ENCODE measurements at regions of chr19 and their contacts with region 1.

Region 1: GRCh38 chr19:49983645-49984229 is 22.8 kb upstream of the SIGLEC11 start:
- DNase-seq: peak in 7 of 10 donors; percentile 57 to 94 (median 69)

Region 2: DNA sequence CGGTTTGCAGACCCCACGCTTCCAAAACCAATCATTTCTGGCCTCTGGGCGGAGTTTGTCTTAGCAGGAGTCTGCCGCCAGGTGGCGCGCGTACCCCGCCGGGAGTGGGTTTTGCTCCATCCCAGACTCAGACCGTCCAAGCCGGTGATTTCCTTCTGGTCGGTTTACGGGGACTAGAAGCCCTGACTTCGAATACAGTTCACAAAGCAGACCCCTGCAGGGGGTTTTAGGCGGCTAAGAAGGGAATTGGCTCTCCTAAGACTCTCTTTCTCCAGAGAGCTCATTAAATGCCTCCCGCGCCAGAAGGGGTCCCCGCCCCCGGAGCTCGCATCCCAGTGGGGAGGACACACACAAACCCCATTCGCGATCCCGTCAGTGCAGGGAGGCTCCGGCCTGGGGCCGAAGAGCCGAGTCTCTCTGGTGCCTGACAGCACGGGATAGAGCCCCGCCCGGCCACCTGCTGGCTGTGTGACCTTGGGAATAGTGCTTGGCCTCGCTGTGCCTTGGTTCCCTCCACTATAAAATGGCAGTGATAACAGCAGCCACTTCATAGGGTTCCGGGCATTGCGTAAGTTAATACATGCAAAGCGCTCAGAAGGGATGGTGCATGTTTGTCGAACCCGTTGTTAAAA is 45.9 kb before region 1 on chr19:
- intact Hi-C with region 1: loop called (anchors 1 kb)
- DNase-seq: peak; percentile 46 to 97 (median 82)